ENCODE measurements at regions of chr10 and their contacts with region 1.

Region 1: GRCh38 chr10:17737027-17737965 is 14.7 kb upstream of the TMEM236 start:
- DNase-seq: peak; percentile 43
- H3K4me3 Mint-ChIP-seq: no peak overlapping the region
- H3K27ac Mint-ChIP-seq: no peak overlapping the region
- H3K4me1 Mint-ChIP-seq: no peaks in the 10 kb centered on the region
- H3K27me3 Mint-ChIP-seq: no peaks in the 10 kb centered on the region
- CTCF ChIP-seq: peak; percentile 50

Region 2: GRCh38 chr10:17607603-17608332 is 129.5 kb before region 1 on chr10:
- CTCF ChIA-PET with region 1: interaction called, 39 read pairs
- POLR2A ChIA-PET with region 1: no interaction called
- intact Hi-C with region 1: no loop called
- DNase-seq: peak; percentile 70
- H3K4me3 Mint-ChIP-seq: no peak overlapping the region
- H3K27ac Mint-ChIP-seq: no peak overlapping the region
- H3K4me1 Mint-ChIP-seq: peaks cover 6% of the 10 kb centered on the region
- H3K27me3 Mint-ChIP-seq: no peaks in the 10 kb centered on the region
- CTCF ChIP-seq: peak; percentile 66

Region 3: GRCh38 chr10:17725703-17726102 is 11.6 kb before region 1 on chr10:
- CTCF ChIA-PET with region 1: interaction called, 17 read pairs
- POLR2A ChIA-PET with region 1: no interaction called
- intact Hi-C with region 1: no loop called
- DNase-seq: no peak
- H3K4me3 Mint-ChIP-seq: no peak overlapping the region
- H3K27ac Mint-ChIP-seq: no peak overlapping the region
- H3K4me1 Mint-ChIP-seq: no peaks in the 10 kb centered on the region
- H3K27me3 Mint-ChIP-seq: no peaks in the 10 kb centered on the region
- CTCF ChIP-seq: no peak

Region 4: DNA sequence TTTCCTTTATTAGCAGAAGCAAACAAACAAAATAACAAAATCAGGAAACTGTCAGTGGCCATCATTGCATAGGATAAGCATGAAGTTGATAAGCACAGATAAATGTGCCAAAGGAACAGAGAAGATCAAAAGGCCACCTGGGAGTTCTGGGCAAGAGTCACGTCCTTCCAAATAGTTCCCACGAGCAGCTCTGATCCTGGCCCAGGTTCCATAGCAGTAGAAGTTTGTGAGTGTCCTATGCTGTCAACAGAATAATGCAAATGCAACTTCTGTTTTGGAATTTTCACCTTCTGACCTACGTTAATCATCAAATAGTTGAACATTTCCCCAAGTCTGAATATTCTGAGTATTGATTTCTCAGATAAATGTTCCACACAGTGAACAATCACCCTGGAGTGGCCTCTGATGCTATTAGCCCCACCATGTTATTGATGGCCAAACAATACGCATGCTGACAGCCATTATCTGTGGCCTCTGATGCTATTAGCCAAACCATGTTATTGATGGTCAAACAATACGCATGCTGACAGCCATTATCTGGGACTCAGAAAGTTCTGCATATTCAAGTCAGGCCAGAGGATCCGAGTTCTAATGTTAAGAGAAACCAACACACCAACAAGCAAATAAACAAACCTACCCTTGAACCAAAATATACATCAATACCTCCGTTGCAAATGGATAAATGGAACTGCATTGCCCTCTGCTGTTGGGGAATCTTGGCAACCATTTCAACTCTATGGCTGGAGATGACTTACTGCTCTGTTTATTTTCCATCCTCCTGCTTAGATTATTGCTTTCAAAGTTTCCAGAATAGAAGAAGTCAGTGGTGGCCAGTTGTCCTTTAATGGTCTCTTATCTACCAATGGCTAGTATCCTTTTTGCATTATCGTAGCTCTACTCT is 135.1 kb after region 1 on chr10:
- CTCF ChIA-PET with region 1: interaction called, 3 read pairs
- POLR2A ChIA-PET with region 1: no interaction called
- intact Hi-C with region 1: loop called (anchors 1 kb)
- DNase-seq: peak; percentile 45
- H3K4me3 Mint-ChIP-seq: no peak overlapping the region
- H3K27ac Mint-ChIP-seq: no peak overlapping the region
- H3K4me1 Mint-ChIP-seq: peaks cover under 1% of the 10 kb centered on the region
- H3K27me3 Mint-ChIP-seq: no peaks in the 10 kb centered on the region
- CTCF ChIP-seq: peak; percentile 31

Region 5: DNA sequence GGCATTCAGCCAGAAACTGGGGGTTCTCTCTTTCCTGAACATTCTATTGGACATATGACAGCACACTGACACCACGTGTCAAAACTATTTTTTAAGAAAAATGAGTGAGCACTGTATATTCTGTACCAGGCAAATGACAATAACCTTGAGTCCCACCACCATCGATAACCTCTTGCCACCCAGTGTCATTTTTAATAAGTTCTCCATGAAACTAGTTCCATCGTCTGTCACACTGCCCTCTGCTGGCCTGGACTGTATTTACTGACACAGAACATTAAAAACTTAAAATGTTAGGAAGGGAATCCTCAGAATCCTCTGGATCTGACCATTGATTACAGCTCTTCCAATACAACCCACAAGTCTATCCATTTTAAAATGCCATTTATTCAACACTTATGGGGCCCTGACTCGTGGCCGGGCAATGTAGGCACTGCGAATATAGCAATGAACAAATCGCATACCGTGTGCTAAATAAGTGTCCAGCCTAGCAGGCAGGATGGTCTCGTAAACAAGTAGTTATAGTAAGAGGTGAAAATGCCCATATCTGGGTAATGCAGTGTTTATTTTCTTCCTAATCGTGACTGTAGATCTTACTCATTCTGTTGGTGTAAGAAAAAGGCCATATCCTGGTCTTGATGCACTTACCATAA is 367.1 kb after region 1 on chr10:
- CTCF ChIA-PET with region 1: interaction called, 3 read pairs
- POLR2A ChIA-PET with region 1: no interaction called
- intact Hi-C with region 1: loop called (anchors 1 kb)
- DNase-seq: peak; percentile 65
- H3K4me3 Mint-ChIP-seq: no peak overlapping the region
- H3K27ac Mint-ChIP-seq: no peak overlapping the region
- H3K4me1 Mint-ChIP-seq: peaks cover 6% of the 10 kb centered on the region
- H3K27me3 Mint-ChIP-seq: no peaks in the 10 kb centered on the region
- CTCF ChIP-seq: peak; percentile 69

Region 6: GRCh38 chr10:18238870-18239485 is 501.7 kb after region 1 on chr10:
- CTCF ChIA-PET with region 1: interaction called, 7 read pairs
- POLR2A ChIA-PET with region 1: no interaction called
- intact Hi-C with region 1: loop called (anchors 5 kb)
- DNase-seq: peak; percentile 57
- H3K4me3 Mint-ChIP-seq: no peak overlapping the region
- H3K27ac Mint-ChIP-seq: no peak overlapping the region
- H3K4me1 Mint-ChIP-seq: peaks cover 18% of the 10 kb centered on the region
- H3K27me3 Mint-ChIP-seq: no peaks in the 10 kb centered on the region
- CTCF ChIP-seq: peak; percentile 59

Region 7: GRCh38 chr10:18312374-18313139 is 575.3 kb after region 1 on chr10:
- CTCF ChIA-PET with region 1: interaction called, 3 read pairs
- POLR2A ChIA-PET with region 1: no interaction called
- intact Hi-C with region 1: loop called (anchors 5 kb)
- DNase-seq: peak; percentile 43
- H3K4me3 Mint-ChIP-seq: no peak overlapping the region
- H3K27ac Mint-ChIP-seq: no peak overlapping the region
- H3K4me1 Mint-ChIP-seq: peaks cover 6% of the 10 kb centered on the region
- H3K27me3 Mint-ChIP-seq: no peaks in the 10 kb centered on the region
- CTCF ChIP-seq: peak; percentile 55

Measured in MCF 10A (cell line).